MCF 10A (cell line): ENCODE measurements at regions of chr15 and their contacts with region 1.

Region 1: DNA sequence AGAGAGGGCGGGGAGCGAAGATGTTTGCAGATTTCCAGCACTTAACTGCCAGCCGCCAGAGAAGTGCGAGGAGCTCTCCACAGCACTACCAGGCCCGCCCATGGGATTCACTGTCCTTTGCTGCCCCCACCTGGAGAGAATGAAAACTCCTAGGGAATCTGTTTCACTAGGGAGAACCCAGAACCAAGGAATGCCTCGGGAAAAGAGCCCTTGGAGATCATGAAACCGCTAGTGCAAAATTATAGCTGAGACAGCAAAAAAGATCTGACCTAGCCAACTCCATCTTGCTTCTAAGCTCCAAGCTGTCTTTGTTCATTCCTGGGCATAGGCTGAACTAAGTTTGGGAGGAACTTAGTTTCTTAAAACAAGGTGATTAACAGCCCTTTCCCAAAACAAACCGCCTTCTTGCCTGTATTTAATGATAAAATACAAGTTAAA is 82.6 kb upstream of the GCNT3 start:
- DNase-seq: peak; percentile 92
- H3K4me3 Mint-ChIP-seq: no peak overlapping the region
- H3K27ac Mint-ChIP-seq: no peak overlapping the region
- H3K4me1 Mint-ChIP-seq: peaks cover 6% of the 10 kb centered on the region
- H3K27me3 Mint-ChIP-seq: no peaks in the 10 kb centered on the region
- CTCF ChIP-seq: peak; percentile 88

Region 2: GRCh38 chr15:58346389-58346788 is 1182.6 kb before region 1 on chr15:
- CTCF ChIA-PET with region 1: no interaction called
- POLR2A ChIA-PET with region 1: no interaction called
- intact Hi-C with region 1: no loop called
- DNase-seq: peak; percentile 75
- H3K4me3 Mint-ChIP-seq: no peak overlapping the region
- H3K27ac Mint-ChIP-seq: no peak overlapping the region
- H3K4me1 Mint-ChIP-seq: no peaks in the 10 kb centered on the region
- H3K27me3 Mint-ChIP-seq: no peaks in the 10 kb centered on the region
- CTCF ChIP-seq: no peak

Region 3: GRCh38 chr15:59104912-59105732 is 423.9 kb before region 1 on chr15 and contains the start of gene CCNB2:
- CTCF ChIA-PET with region 1: interaction called, 10 read pairs
- POLR2A ChIA-PET with region 1: no interaction called
- intact Hi-C with region 1: no loop called
- DNase-seq: peak; percentile 96
- H3K4me3 Mint-ChIP-seq: peak within 1 kb of the TSS; percentile 82
- H3K27ac Mint-ChIP-seq: peak within 1 kb of the TSS; percentile 91
- H3K4me1 Mint-ChIP-seq: peaks cover 7% of the 10 kb centered on the region
- H3K27me3 Mint-ChIP-seq: no peaks in the 10 kb centered on the region
- CTCF ChIP-seq: no peak
- total RNA-seq, gene CCNB2: 25.7 and 54.1 TPM in 2 replicates

Region 4: DNA sequence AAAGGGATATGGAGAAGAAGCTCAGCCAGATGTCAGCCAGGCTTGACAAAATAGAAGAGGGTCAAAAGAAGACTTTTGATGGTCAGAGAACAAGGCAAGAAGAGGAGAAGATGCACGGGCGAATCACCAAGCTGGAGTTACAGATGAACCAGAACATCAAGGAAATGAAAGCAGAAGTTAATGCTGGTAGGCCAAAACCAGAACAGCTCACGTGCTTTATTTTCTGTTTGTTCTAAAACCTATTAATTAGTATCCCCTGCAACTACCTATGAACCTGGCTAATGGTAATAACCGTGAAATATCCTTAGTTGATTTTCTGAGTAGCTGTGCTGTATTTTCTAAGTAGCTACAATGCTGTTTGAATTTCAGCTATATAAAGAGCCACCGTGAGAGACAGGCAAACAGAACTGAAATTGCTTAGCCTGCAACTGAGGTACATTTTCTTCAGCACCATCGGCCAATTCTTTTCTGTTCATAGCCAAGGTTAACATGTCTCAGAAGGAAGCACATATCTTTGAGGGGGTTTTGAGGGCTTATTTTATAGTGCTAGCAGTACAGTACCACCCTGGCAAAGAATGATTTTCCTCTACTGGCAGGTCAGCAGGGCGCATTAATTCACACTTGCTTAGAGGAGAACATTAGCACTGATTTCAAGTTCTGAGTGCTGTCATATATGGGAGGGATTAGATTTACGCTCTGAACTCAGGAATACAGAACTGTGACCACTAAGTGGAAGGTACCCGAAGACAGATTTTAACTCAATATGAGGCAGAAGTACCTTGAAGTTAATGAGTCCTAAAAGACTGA is 12.1 kb before region 1 on chr15:
- CTCF ChIA-PET with region 1: interaction called, 19 read pairs
- POLR2A ChIA-PET with region 1: interaction called, 5 read pairs
- intact Hi-C with region 1: no loop called
- DNase-seq: no peak
- H3K4me3 Mint-ChIP-seq: no peak overlapping the region
- H3K27ac Mint-ChIP-seq: no peak overlapping the region
- H3K4me1 Mint-ChIP-seq: no peaks in the 10 kb centered on the region
- H3K27me3 Mint-ChIP-seq: no peaks in the 10 kb centered on the region
- CTCF ChIP-seq: no peak

Region 5: GRCh38 chr15:59550525-59550924 is 21.5 kb after region 1 on chr15:
- CTCF ChIA-PET with region 1: interaction called, 18 read pairs
- POLR2A ChIA-PET with region 1: interaction called, 7 read pairs
- intact Hi-C with region 1: no loop called
- DNase-seq: no peak
- H3K4me3 Mint-ChIP-seq: no peak overlapping the region
- H3K27ac Mint-ChIP-seq: no peak overlapping the region
- H3K4me1 Mint-ChIP-seq: peaks cover 21% of the 10 kb centered on the region
- H3K27me3 Mint-ChIP-seq: no peaks in the 10 kb centered on the region
- CTCF ChIP-seq: no peak

Region 6: DNA sequence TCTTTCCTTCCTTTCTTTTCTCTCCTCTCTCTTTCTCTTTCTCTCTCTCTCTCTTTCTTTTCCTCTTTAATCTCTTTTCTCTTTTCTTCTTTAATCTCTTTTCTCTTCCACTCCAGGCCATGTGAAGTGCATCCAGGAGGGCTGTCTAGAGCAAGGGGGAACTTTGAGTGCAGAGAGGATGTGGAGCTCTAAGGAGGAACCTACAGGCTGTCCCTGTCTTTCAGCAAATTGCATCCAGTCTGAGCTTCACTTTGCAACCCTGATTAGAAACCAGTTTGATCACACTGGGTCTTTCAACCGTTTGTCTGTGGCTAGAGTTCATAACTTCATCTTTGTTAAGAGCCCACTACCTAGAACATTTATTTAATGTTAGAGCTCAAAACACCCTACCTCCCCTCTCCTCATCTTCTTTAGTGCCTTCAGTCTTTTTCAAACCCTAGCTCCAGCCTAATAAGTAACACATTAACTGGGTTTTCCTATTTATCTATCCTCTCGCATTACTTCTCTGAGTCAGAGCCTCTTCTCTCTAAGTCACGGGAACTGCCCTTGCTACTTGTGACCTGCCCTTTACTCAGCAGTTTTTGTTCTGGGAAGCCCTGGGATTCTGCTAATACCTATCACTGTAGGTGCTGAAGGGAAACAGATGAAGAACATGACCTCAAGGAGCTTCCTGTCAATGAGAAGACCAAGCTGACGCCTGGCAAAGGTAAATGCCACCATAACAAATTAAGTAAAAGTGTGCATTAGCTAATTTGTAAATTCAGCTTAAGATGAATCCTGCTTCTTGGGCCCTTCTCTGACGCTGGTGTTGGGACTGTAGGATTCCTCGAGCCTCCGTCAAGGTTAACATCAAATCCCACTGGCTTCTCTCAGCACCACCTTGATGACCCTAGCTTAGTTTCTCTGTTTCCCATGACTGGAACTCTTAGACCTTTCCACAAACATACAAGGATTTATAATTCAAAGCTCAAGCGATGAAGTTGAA is 82.6 kb after region 1 on chr15 and contains the start of gene GCNT3:
- CTCF ChIA-PET with region 1: interaction called, 23 read pairs
- POLR2A ChIA-PET with region 1: interaction called, 3 read pairs
- intact Hi-C with region 1: no loop called
- DNase-seq: peak; percentile 31
- H3K4me3 Mint-ChIP-seq: no peak within 1 kb of the TSS
- H3K27ac Mint-ChIP-seq: peak within 1 kb of the TSS; percentile 79
- H3K4me1 Mint-ChIP-seq: peaks cover 17% of the 10 kb centered on the region
- H3K27me3 Mint-ChIP-seq: peaks cover 8% of the 10 kb centered on the region
- CTCF ChIP-seq: no peak
- total RNA-seq, gene GCNT3: not detected in 2 replicates

Region 7: DNA sequence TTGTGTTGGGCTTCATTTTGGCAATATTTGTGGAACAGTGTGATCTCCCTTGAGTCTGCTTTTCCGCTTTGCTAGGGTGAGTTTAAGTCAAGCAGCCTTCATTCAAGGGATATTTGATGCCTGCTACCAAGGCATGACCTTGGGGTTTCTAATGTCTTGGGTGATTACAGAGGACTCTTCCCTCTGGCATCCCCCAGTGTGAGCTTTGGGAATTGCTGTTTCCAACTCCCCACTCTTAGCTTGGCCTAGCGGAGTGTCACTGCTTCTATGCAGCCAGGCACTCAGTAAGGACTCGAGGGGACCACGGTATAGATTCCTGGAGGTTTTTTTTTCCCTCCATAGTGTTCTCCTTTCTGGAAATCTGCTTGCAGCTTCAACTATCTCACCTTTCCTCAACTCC is 103.7 kb after region 1 on chr15:
- CTCF ChIA-PET with region 1: interaction called, 196 read pairs
- POLR2A ChIA-PET with region 1: interaction called, 6 read pairs
- intact Hi-C with region 1: no loop called
- DNase-seq: peak; percentile 36
- H3K4me3 Mint-ChIP-seq: no peak overlapping the region
- H3K27ac Mint-ChIP-seq: no peak overlapping the region
- H3K4me1 Mint-ChIP-seq: no peaks in the 10 kb centered on the region
- H3K27me3 Mint-ChIP-seq: no peaks in the 10 kb centered on the region
- CTCF ChIP-seq: peak; percentile 34

Region 8: DNA sequence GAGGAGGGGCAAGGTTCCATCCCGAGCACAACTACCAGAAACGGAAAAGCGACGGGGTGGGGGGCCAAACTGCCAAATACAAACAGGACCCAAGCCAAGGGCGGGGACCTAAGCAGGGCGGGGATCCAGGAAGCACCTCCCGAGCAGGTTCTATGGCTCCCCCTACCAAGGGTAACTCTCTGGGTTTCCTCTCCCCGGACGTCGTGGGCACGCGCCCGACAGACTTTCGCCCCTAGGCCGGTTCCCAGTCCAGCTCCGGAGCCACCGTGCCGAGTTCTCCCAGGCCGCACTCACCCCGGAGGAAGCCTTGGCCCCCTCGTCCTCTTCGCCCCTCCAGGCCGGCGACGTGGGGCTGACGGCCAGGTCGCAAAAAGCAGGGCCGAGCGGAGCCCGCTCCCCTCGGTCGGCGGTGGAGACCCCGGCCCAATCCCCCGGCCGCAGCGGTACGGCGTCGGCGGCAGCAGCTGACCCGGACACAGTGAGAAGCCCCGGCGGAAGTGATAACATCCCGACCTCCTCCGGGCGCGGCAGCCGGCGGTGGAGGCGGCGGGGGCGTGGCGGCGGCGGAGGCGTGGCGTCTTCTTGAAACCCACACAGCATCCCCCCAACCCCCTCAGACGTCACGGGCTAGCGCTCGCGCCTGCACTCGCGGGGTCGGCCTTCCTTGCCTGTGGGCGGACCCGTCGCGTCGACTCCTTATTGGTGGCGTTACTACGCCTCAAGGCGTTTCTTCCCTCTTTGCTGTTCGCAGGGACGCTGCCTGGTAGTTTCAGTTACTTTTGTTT is 160.0 kb after region 1 on chr15 and contains the start of gene BNIP2:
- CTCF ChIA-PET with region 1: interaction called, 10 read pairs
- POLR2A ChIA-PET with region 1: interaction called, 6 read pairs
- intact Hi-C with region 1: no loop called
- DNase-seq: peak; percentile 96
- H3K4me3 Mint-ChIP-seq: peak within 1 kb of the TSS; percentile 86
- H3K27ac Mint-ChIP-seq: peak within 1 kb of the TSS; percentile 98
- H3K4me1 Mint-ChIP-seq: peaks cover 18% of the 10 kb centered on the region
- H3K27me3 Mint-ChIP-seq: no peaks in the 10 kb centered on the region
- CTCF ChIP-seq: no peak
- total RNA-seq, gene BNIP2: 80.7 and 91.5 TPM in 2 replicates